Calu3 (cell line): ENCODE measurements at regions of chr3 and their contacts with region 1.

Region 1: GRCh38 chr3:171646357-171647133 is 163.7 kb downstream of the PLD1 start:
- DNase-seq: no peak
- H3K4me3 Mint-ChIP-seq: no peak overlapping the region
- H3K27ac Mint-ChIP-seq: no peak overlapping the region
- H3K4me1 Mint-ChIP-seq: peaks cover 9% of the 10 kb centered on the region
- H3K27me3 Mint-ChIP-seq: no peaks in the 10 kb centered on the region
- CTCF ChIP-seq: peak; percentile 63

Region 2: GRCh38 chr3:171620825-171621434 is 25.6 kb before region 1 on chr3:
- CTCF ChIA-PET with region 1: no interaction called
- intact Hi-C with region 1: no loop called
- DNase-seq: no peak
- H3K4me3 Mint-ChIP-seq: no peak overlapping the region
- H3K27ac Mint-ChIP-seq: no peak overlapping the region
- H3K4me1 Mint-ChIP-seq: peaks cover 16% of the 10 kb centered on the region
- H3K27me3 Mint-ChIP-seq: no peaks in the 10 kb centered on the region
- CTCF ChIP-seq: no peak

Region 3: GRCh38 chr3:171690281-171690680 is 43.7 kb after region 1 on chr3:
- CTCF ChIA-PET with region 1: interaction called, 10 read pairs
- intact Hi-C with region 1: no loop called
- DNase-seq: no peak
- H3K4me3 Mint-ChIP-seq: no peak overlapping the region
- H3K27ac Mint-ChIP-seq: no peak overlapping the region
- H3K4me1 Mint-ChIP-seq: no peaks in the 10 kb centered on the region
- H3K27me3 Mint-ChIP-seq: no peaks in the 10 kb centered on the region
- CTCF ChIP-seq: no peak

Region 4: GRCh38 chr3:172106989-172107388 is 460.4 kb after region 1 on chr3:
- CTCF ChIA-PET with region 1: no interaction called
- intact Hi-C with region 1: loop called (anchors 10 kb)
- DNase-seq: no peak
- H3K4me3 Mint-ChIP-seq: no peak overlapping the region
- H3K27ac Mint-ChIP-seq: peak overlapping the region; percentile 61
- H3K4me1 Mint-ChIP-seq: peaks cover 79% of the 10 kb centered on the region
- H3K27me3 Mint-ChIP-seq: no peaks in the 10 kb centered on the region
- CTCF ChIP-seq: no peak